ENCODE measurements at regions of chr19 and their contacts with region 1.

Region 1: DNA sequence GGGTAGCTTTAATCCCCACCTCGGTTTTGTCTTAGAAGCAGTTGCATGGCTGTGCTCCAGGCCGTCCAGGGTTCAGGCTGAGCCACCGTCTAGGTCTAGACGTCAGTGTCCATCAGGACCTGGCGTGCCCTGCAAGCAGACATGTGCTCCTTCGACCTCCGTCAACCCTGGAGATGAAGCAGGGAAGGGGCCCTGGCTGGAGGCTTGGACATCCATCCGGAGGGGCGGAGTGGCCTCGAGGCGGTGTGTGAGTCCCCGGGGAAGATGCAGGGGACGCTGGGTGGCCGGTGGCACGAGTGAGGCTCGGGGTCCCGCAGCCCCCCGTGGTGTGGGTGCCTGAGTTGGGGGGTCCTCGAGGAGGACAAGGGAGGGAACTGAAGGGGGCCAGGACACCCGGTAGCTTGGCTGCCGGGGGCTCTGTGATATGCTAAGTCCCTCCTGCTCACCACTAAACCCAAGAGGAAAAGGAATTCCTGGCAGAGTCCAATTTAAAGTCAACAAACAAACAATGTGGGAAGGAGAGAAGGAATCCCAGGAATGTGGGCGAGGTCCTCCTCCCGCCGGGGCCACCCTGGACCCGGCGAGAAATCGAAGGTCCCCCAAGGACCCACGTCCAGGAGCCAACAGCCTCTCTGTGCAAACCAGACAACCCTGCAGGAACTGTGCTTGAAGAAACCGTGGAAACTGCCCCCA is 14.9 kb upstream of the PTBP1 start:
- DNase-seq: peak; percentile 66
- H3K4me3 ChIP-seq: peak overlapping the region in 2 of 3 experiments; percentile 7 to 20
- H3K27ac ChIP-seq: peak overlapping the region; percentile 94
- H3K4me1 ChIP-seq: peaks cover 32% of the 10 kb centered on the region
- H3K27me3 ChIP-seq: no peaks in the 10 kb centered on the region
- CTCF ChIP-seq: no peak
- POLR2A ChIP-seq: no peak

Region 2: DNA sequence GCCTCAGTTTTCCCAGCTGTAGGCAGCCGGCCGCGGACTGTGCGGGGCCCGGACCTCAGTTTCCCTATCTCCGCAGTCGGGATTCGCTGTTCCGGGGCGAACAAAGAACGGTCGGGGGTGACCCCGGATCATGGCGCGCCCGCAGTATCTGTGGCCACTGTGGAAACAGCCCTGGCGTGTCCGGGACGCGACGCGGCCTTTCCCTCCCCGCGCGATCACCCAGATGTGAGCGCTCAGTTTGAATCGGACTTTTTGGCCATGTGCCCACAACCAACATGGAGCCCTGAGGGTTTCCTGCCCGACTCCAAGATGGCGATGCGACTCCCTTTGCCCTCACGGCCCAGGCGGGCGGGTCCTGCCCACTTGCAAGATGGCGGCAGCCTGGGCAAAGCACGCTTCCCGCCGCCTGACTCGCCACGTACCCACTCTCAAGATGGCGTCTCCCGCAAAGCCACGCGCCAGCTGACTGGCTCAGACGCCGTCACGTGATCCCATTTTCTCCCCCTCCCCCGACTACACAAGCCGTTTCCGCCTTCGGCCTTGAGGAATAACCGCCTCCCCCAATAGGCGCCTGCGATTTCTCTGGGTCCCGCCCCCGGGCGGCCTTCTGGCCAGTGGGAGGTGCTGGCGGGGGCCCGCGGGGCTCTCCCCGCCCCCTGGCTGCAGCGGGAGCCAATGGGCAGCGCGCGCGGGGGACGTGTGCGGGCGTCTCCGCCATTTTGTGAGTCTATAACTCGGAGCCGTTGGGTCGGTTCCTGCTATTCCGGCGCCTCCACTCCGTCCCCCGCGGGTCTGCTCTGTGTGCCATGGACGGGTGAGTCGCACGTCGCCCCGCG is 14.6 kb after region 1 on chr19 and contains the start of gene PTBP1:
- CTCF ChIA-PET with region 1: interaction called, 5 read pairs
- POLR2A ChIA-PET with region 1: interaction called, 5 read pairs
- dilution Hi-C with region 1: no loop called
- intact Hi-C with region 1: loop called (anchors 1 kb)
- DNase-seq: peak; percentile 100
- H3K4me3 ChIP-seq: peak within 1 kb of the TSS; percentile 84 to 93 (median 87)
- H3K27ac ChIP-seq: peak within 1 kb of the TSS; percentile 73
- H3K4me1 ChIP-seq: peaks cover 33% of the 10 kb centered on the region
- H3K27me3 ChIP-seq: no peaks in the 10 kb centered on the region
- CTCF ChIP-seq: no peak
- POLR2A ChIP-seq: peak; percentile 88
- total RNA-seq, gene PTBP1: 607 and 623 TPM in 2 replicates

Region 3: GRCh38 chr19:801861-802497 is 19.6 kb after region 1 on chr19:
- CTCF ChIA-PET with region 1: interaction called, 5 read pairs
- POLR2A ChIA-PET with region 1: interaction called, 5 read pairs
- dilution Hi-C with region 1: no loop called
- intact Hi-C with region 1: loop called (anchors 1 kb)
- DNase-seq: peak; percentile 57
- H3K4me3 ChIP-seq: peak overlapping the region in 2 of 3 experiments; percentile 12 to 28
- H3K27ac ChIP-seq: peak overlapping the region; percentile 13
- H3K4me1 ChIP-seq: peaks cover 35% of the 10 kb centered on the region
- H3K27me3 ChIP-seq: no peaks in the 10 kb centered on the region
- CTCF ChIP-seq: no peak
- POLR2A ChIP-seq: no peak